ENCODE measurements at regions of chr6 and their contacts with region 1.

Region 1: DNA sequence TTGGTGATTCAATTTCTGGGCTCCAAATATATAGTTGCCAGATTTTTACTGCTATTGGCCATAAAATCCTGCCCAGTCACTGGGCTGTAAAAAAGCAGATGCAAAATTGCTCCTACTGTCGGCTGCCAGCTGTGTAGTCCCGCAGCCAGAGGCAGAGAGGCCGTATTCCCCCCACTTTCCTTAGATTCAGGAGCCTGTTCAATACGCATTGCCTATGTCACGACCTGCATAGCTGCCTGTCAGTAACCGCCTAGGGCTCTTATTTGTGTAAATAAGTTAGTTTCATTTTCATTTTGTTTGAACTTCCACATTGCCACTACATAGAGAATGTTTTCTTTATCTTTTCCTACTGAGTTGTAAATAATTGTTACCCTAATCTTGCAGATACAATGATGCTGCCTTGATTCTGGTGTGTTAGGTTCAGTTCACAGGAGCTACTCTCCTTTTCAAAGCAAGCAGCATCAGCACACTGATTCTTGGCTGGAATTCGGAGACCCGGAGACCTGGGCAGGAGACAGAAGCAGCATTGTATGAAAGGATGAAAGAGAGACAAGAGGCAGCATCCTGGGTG is 46.0 kb upstream of the UST start:
- DNase-seq: peak; percentile 21
- H3K4me3 ChIP-seq: peak overlapping the region; percentile 35 to 44 (median 38)
- H3K27ac ChIP-seq: no peak overlapping the region
- H3K4me1 ChIP-seq: peaks cover 8% of the 10 kb centered on the region
- H3K27me3 ChIP-seq: no peaks in the 10 kb centered on the region
- CTCF ChIP-seq: no peak

Region 2: GRCh38 chr6:147699637-147700036 is 1001.2 kb before region 1 on chr6:
- CTCF ChIA-PET with region 1: no interaction called
- dilution Hi-C with region 1: no loop called
- in situ Hi-C with region 1: no loop called
- intact Hi-C with region 1: no loop called
- DNase-seq: peak; percentile 78
- H3K4me3 ChIP-seq: no peak overlapping the region
- H3K27ac ChIP-seq: no peak overlapping the region
- H3K4me1 ChIP-seq: peaks cover 9% of the 10 kb centered on the region
- H3K27me3 ChIP-seq: no peaks in the 10 kb centered on the region
- CTCF ChIP-seq: no peak

Region 3: GRCh38 chr6:148367411-148368024 is 333.3 kb before region 1 on chr6:
- CTCF ChIA-PET with region 1: interaction called, 13 read pairs
- dilution Hi-C with region 1: no loop called
- in situ Hi-C with region 1: no loop called
- intact Hi-C with region 1: no loop called
- DNase-seq: peak; percentile 42
- H3K4me3 ChIP-seq: no peak overlapping the region
- H3K27ac ChIP-seq: no peak overlapping the region
- H3K4me1 ChIP-seq: peaks cover 41% of the 10 kb centered on the region
- H3K27me3 ChIP-seq: no peaks in the 10 kb centered on the region
- CTCF ChIP-seq: no peak

Region 4: DNA sequence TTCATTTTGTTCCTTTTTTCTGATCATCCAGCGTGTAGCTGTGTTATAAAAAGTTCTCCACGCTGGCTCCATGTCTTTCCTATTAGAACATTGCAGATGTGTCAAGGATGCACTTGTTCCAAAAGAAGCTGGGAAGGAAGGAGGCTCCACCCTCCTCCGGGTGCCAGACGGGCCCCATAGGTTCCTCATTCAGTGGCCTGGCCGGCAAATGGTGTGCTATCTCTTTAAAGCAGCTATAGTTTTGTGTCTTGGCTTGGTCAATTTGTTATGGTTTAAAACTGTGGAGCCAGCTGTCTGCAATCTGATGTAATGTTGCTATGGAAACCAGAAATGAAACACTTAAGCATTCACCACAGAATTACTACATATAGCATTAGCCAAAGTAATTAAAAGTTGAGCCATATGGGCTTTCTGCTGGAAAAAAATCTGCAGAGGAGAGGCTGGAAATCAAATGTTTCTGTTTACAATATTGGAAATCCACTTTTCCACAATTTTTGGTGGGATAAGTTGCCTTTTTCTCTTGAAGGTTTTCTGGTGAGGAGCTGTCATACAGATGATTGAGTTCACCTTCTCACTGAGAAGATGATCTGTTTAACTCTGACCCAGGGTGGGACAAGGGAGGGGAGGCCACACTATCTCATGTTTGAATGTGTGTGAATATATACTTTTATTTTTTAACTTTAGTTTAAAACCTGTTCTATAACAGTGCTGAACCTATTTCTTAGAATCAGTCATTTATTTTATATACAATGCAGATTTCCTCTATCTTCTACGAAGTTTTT is 190.8 kb before region 1 on chr6:
- CTCF ChIA-PET with region 1: no interaction called
- dilution Hi-C with region 1: no loop called
- in situ Hi-C with region 1: no loop called
- intact Hi-C with region 1: no loop called
- DNase-seq: peak; percentile 79
- H3K4me3 ChIP-seq: no peak overlapping the region
- H3K27ac ChIP-seq: peak overlapping the region; percentile 60
- H3K4me1 ChIP-seq: peaks cover 22% of the 10 kb centered on the region
- H3K27me3 ChIP-seq: no peaks in the 10 kb centered on the region
- CTCF ChIP-seq: no peak